ENCODE measurements at regions of chr7 and their contacts with region 1.

Region 1: GRCh38 chr7:17159500-17160037 is 138.9 kb upstream of the AHR start:
- DNase-seq: no peak
- ATAC-seq: no peak
- H3K4me3 ChIP-seq: no peak overlapping the region
- H3K27ac ChIP-seq: no peak overlapping the region
- H3K4me1 ChIP-seq: no peaks in the 10 kb centered on the region
- H3K27me3 ChIP-seq: no peaks in the 10 kb centered on the region
- CTCF ChIP-seq: no peak
- POLR2A ChIP-seq: no peak
- RAD21 ChIP-seq: no peak

Region 2: DNA sequence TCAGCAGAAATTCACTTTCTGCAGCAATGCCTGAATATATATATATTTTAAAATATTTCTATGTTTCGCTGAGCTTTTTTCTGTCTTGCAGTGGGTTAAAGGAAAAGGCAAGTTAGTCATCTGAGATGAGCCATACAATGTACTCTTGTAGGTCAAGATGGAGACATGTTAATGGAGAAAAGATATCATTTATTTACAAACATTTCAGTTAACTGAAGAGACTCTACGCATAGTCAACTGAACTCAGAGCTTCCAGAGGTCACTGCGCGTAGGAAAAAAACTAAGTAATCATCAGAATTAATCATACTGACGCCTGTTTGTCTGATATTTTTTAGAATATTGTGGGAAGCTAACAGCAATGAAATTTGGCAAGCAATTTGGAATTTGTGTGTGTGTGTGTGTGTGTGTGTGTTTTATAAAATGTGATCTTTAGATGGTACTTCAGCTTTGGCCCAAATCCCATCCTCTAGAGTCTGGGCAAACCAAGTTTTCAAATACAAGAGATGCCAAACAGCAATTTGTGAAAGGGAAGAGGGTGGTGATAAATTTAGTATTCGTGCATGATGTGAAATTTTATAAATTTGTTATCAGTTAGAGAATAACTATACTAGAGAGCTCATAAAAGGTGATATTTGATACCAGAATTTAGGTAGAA is 83.8 kb before region 1 on chr7:
- CTCF ChIA-PET with region 1: no interaction called
- POLR2A ChIA-PET with region 1: no interaction called
- dilution Hi-C with region 1: no loop called
- in situ Hi-C with region 1: no loop called
- intact Hi-C with region 1: no loop called
- DNase-seq: peak; percentile 57
- ATAC-seq: peak; percentile 37
- H3K4me3 ChIP-seq: no peak overlapping the region
- H3K27ac ChIP-seq: no peak overlapping the region
- H3K4me1 ChIP-seq: no peaks in the 10 kb centered on the region
- H3K27me3 ChIP-seq: no peaks in the 10 kb centered on the region
- CTCF ChIP-seq: no peak
- POLR2A ChIP-seq: no peak
- RAD21 ChIP-seq: no peak

Region 3: GRCh38 chr7:17521437-17521836 is 361.9 kb after region 1 on chr7:
- CTCF ChIA-PET with region 1: interaction called, 11 read pairs
- POLR2A ChIA-PET with region 1: no interaction called
- dilution Hi-C with region 1: no loop called
- in situ Hi-C with region 1: no loop called
- intact Hi-C with region 1: no loop called
- DNase-seq: peak; percentile 84
- ATAC-seq: peak; percentile 86
- H3K4me3 ChIP-seq: no peak overlapping the region
- H3K27ac ChIP-seq: peak overlapping the region; percentile 26; the same call in 1 of the 2 replicates
- H3K4me1 ChIP-seq: peaks cover 6% of the 10 kb centered on the region
- H3K27me3 ChIP-seq: no peaks in the 10 kb centered on the region
- CTCF ChIP-seq: no peak
- POLR2A ChIP-seq: no peak
- RAD21 ChIP-seq: 0 out of 2 replicates have a peak, but pooled peaks have one; percentile 6

Measured in IMR-90 (cell line).